ENCODE measurements at regions of chr12 and their contacts with region 1.

Region 1: DNA sequence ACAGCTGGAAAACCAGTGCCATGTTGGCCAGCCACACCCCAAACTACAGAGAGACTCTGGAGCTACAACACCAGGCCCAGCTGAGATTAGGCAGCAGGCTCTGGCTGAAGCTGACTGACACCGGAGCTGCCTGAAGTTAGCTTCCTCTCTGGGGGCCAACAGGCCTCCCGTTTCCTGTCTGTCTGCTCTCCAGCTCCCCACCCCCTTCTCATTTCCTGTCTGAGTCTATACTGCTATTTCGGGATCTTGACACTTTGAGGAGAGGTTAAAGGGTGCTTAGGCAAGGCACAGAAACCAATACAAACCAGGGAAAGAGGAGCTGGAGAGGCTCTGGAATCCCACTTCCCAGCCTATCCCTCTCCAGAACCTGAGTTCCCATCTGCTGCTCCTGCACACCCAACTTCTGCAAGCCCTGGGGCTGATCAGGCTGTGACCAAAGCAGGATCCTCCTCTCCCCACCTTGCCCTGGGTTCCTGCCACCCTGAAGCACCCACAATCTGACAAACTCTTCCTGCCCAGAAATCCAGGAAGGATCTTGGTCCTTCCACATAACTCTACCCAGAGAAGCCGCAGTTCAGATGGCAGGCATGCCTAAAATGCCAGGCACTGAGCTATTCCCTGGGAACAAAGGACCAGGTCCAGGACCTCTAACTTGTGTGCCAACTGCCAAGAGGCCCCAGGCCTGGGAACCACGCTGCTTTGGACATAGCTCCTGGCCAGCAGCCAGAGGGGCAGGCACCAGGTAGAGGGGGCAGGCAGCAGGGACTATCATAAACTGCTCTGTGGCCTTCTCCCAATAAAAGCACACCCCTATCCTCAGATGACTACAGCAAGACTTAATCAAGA is 39.9 kb downstream of the PRPF40B start:
- DNase-seq: peak; percentile 92
- H3K4me3 Mint-ChIP-seq: peak overlapping the region; percentile 80
- H3K27ac Mint-ChIP-seq: peak overlapping the region; percentile 93
- H3K4me1 Mint-ChIP-seq: peaks cover 66% of the 10 kb centered on the region
- H3K27me3 Mint-ChIP-seq: no peaks in the 10 kb centered on the region

Region 2: GRCh38 chr12:49644620-49644994 is 18.6 kb before region 1 on chr12:
- intact Hi-C with region 1: loop called (anchors 2 kb)
- DNase-seq: peak; percentile 94
- H3K4me3 Mint-ChIP-seq: no peak overlapping the region
- H3K27ac Mint-ChIP-seq: peak overlapping the region; percentile 70
- H3K4me1 Mint-ChIP-seq: peaks cover 29% of the 10 kb centered on the region
- H3K27me3 Mint-ChIP-seq: no peaks in the 10 kb centered on the region

Region 3: DNA sequence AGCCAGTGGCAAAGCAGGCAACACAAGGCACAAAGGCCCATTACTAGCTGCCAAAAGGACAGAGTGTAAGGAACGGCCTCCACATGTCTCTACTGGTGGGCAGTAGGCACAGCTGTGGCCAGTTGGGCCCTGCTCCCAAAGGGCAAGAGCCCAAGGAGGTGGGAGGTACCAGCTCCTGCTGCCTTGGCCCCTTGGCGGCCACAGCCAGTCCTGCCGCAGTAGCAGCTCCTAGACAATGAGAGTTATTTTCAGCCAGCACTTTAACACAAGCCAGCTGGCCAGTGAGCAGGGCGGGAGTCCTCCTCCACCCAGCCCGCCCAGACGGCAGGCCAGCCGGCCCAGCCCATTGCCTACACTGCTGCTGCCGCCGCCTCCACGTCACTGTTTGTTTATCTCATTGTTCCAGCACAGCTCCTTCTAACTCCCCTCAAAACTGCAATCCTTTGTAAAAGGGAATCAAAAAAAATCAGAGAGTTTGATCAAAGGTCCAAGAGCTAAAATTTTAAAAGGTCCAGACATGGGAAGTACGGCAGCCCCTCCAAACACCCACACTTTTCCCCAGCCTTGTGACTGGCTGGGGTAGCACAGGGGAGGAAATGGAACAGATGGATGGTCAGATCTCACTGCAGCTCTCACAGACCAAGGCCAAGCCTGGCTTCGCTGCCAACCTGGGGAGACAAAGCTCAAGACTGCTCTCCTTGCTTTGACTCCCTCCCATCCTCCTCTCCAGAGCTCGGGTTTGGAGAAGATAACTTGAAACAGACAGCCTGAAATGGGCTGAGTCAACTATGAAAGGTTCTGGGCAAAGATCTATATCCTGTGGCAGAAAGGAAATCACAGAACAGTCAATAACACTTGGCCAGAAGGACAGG is 10.5 kb after region 1 on chr12:
- intact Hi-C with region 1: loop called (anchors 1 kb)
- DNase-seq: peak; percentile 62
- H3K4me3 Mint-ChIP-seq: peak overlapping the region; percentile 27
- H3K27ac Mint-ChIP-seq: peak overlapping the region; percentile 91
- H3K4me1 Mint-ChIP-seq: peaks cover 69% of the 10 kb centered on the region
- H3K27me3 Mint-ChIP-seq: no peaks in the 10 kb centered on the region

Region 4: GRCh38 chr12:49698619-49699545 is 35.7 kb after region 1 on chr12:
- intact Hi-C with region 1: loop called (anchors 1 kb)
- DNase-seq: peak; percentile 77
- H3K4me3 Mint-ChIP-seq: peak overlapping the region; percentile 72
- H3K27ac Mint-ChIP-seq: peak overlapping the region; percentile 83
- H3K4me1 Mint-ChIP-seq: peaks cover 42% of the 10 kb centered on the region
- H3K27me3 Mint-ChIP-seq: no peaks in the 10 kb centered on the region

Region 5: GRCh38 chr12:49750027-49750995 is 87.1 kb after region 1 on chr12:
- intact Hi-C with region 1: loop called (anchors 5 kb)
- DNase-seq: peak; percentile 77
- H3K4me3 Mint-ChIP-seq: peak overlapping the region; percentile 68
- H3K27ac Mint-ChIP-seq: peak overlapping the region; percentile 79
- H3K4me1 Mint-ChIP-seq: peaks cover 60% of the 10 kb centered on the region
- H3K27me3 Mint-ChIP-seq: no peaks in the 10 kb centered on the region